CD4-positive, alpha-beta memory T cell (primary cell): ENCODE measurements at regions of chr11 and their contacts with region 1.

Region 1: DNA sequence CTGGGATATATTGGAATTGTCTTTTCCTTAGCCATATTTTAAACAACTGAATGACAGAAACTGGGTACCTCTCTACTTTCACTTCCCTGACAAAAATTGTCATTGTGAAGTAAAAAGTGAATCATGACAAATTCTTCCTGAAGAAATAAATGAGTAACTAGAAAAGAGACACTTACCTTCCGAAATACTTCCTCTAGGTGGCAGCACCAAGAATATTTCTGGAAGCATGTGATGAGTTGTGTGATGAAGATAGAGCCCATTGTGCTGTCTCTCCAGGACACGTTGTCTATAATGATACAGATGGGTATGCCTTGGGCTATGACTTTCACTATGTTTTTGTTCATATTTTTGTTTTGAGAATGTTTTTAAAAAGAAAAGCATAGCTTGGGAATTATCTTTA is 21.5 kb downstream of the CASP4 start:
- DNase-seq: peak in 4 of 5 donors; percentile 48 to 60 (median 50)
- H3K4me3 ChIP-seq: no peak overlapping the region
- H3K4me3 Mint-ChIP-seq: no peak overlapping the region
- H3K27ac ChIP-seq: no peak overlapping the region
- H3K27ac Mint-ChIP-seq: peak overlapping the region in 4 of 7 donors; percentile 27 to 89 (median 79)
- H3K4me1 ChIP-seq: peaks cover 5% of the 10 kb centered on the region
- H3K4me1 Mint-ChIP-seq: peaks cover 11 to 28% (median 16%) of the 10 kb centered on the region in 4 donors
- H3K27me3 ChIP-seq: no peaks in the 10 kb centered on the region
- H3K27me3 Mint-ChIP-seq: no peaks in the 10 kb centered on the region

Region 2: DNA sequence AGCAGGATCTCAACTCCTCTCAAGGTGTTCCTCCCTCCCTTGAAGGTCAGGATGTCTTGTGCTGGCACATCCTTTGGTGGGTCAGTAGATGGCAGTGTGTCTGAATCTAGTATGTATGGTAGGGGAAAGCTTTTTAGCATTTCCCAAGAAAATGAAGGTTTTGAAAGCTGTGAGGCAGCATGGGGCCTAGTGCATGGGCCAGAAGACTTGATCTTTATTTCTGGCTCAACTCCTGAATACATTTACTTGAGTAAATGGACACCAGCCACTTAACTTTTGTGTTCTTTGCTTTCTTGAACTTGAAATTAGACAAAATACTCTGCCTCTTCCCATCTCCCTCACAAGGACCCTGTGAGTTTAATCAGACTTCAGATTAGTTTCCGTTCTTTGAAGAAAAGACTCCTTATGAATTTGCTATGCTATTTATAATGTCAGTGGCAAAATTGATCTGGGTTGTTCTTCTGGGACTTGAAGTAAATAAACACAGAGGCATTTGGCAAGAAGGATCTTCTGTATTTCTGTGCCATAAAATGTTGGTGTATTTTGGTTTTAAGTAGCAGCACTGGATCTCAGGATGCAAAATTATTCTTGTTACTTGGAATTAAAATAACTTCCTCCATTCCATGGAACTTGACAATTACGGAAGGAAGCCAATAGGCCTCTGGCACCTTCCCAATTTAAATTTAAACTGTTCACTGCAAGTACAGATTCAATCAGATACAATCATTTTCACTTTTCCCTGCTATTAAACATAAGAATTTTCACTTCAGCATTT is 337.4 kb before region 1 on chr11:
- CTCF ChIA-PET with region 1: interaction called, 5 read pairs
- POLR2A ChIA-PET with region 1: no interaction called
- intact Hi-C with region 1: loop called (anchors 2 kb)
- DNase-seq: peak; percentile 37 to 62 (median 56)
- H3K4me3 ChIP-seq: no peak overlapping the region
- H3K4me3 Mint-ChIP-seq: peak overlapping the region in 2 of 8 donors; percentile 15 to 18
- H3K27ac ChIP-seq: no peak overlapping the region
- H3K27ac Mint-ChIP-seq: peak overlapping the region in 2 of 7 donors; percentile 37 to 54
- H3K4me1 ChIP-seq: peaks cover 12% of the 10 kb centered on the region
- H3K4me1 Mint-ChIP-seq: peaks cover 10 to 12% (median 11%) of the 10 kb centered on the region in 4 donors
- H3K27me3 ChIP-seq: no peaks in the 10 kb centered on the region
- H3K27me3 Mint-ChIP-seq: no peaks in the 10 kb centered on the region

Region 3: GRCh38 chr11:104934594-104934993 is 12.3 kb before region 1 on chr11:
- CTCF ChIA-PET with region 1: interaction called, 10 read pairs
- POLR2A ChIA-PET with region 1: no interaction called
- intact Hi-C with region 1: no loop called
- DNase-seq: peak in 4 of 5 donors; percentile 19 to 28 (median 24)
- H3K4me3 ChIP-seq: no peak overlapping the region
- H3K4me3 Mint-ChIP-seq: peak overlapping the region; percentile 13 to 87 (median 80)
- H3K27ac ChIP-seq: no peak overlapping the region
- H3K27ac Mint-ChIP-seq: peak overlapping the region in 4 of 7 donors; percentile 28 to 89 (median 60)
- H3K4me1 ChIP-seq: peaks cover 25% of the 10 kb centered on the region
- H3K4me1 Mint-ChIP-seq: peaks cover 29 to 49% (median 34%) of the 10 kb centered on the region in 4 donors
- H3K27me3 ChIP-seq: no peaks in the 10 kb centered on the region
- H3K27me3 Mint-ChIP-seq: no peaks in the 10 kb centered on the region

Region 4: DNA sequence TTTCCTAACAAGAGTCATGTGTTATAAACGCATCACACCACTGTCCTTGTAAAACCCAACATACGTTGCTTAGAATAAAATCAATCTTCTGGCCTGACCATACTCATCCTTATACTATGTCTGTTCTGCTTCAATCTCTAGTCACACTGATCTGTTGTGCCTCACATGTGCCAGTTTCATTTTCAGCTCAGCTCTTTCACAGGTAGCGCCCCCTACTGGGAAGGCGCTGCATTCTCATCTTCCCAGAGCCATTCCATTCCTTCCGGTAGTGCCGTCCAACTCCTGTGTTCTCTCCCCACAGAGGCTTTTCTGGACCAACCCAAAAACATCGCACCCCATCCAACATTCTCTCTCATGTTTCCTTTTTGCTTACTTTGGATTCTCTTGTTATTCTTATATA is 53.9 kb after region 1 on chr11:
- CTCF ChIA-PET with region 1: interaction called, 3 read pairs
- POLR2A ChIA-PET with region 1: no interaction called
- intact Hi-C with region 1: loop called (anchors 2 kb)
- DNase-seq: peak in 4 of 5 donors; percentile 49 to 59 (median 52)
- H3K4me3 ChIP-seq: no peak overlapping the region
- H3K4me3 Mint-ChIP-seq: peak overlapping the region in 2 of 8 donors; percentile 11 to 35
- H3K27ac ChIP-seq: no peak overlapping the region
- H3K27ac Mint-ChIP-seq: no peak overlapping the region
- H3K4me1 ChIP-seq: no peaks in the 10 kb centered on the region
- H3K4me1 Mint-ChIP-seq: peaks cover 4 to 7% (median 6%) of the 10 kb centered on the region in 4 donors
- H3K27me3 ChIP-seq: no peaks in the 10 kb centered on the region
- H3K27me3 Mint-ChIP-seq: no peaks in the 10 kb centered on the region

Region 5: DNA sequence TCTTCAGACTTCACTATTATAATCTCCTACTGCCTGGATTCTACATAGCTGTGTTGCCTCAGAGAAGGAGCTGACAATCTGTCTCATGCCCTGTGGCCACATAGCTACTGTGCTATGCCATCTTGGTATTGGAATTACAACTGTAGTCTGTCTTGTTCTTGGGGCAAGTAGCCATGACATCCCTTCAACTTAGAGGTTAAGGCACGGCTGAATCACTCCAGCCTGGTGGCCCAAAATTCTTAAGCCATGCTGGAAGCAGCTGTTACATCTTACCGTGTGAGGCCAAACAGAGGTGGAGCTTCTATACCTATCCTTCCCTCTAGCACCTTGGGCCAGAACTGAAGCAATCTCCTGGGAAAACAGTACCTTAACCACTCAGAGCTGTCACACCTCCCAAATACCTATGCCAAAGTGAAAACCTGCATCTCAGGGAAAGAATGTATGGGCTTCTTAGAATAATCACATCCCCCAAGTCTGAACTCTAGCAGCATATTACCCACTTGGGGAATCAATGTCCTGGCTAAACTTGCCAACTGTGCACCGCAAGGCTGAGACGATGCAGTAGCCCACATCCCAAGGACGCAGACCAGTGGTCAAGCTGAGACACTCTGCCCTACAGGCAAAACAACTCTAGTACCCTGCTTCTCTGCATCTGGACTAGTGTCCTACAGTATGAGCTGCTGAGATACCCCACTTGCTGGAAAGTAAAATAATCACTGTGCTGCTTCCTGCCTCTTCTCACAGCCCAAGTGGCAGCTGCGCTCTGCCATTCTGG is 178.0 kb after region 1 on chr11:
- CTCF ChIA-PET with region 1: interaction called, 3 read pairs
- POLR2A ChIA-PET with region 1: no interaction called
- intact Hi-C with region 1: loop called (anchors 10 kb)
- DNase-seq: no peak
- H3K4me3 ChIP-seq: no peak overlapping the region
- H3K4me3 Mint-ChIP-seq: no peak overlapping the region
- H3K27ac ChIP-seq: no peak overlapping the region
- H3K27ac Mint-ChIP-seq: no peak overlapping the region
- H3K4me1 ChIP-seq: no peaks in the 10 kb centered on the region
- H3K4me1 Mint-ChIP-seq: peaks cover 0 to 3% (median 0%) of the 10 kb centered on the region in 4 donors
- H3K27me3 ChIP-seq: no peaks in the 10 kb centered on the region
- H3K27me3 Mint-ChIP-seq: no peaks in the 10 kb centered on the region